Esophagus muscularis mucosa (tissue), 4 donors: ENCODE measurements at regions of chr1 and their contacts with region 1.

Region 1: GRCh38 chr1:14923727-14924452 is 229.7 kb upstream of the TMEM51 start:
- DNase-seq: no peak
- H3K4me3 ChIP-seq: peak overlapping the region; percentile 66 to 88 (median 70)
- H3K27ac ChIP-seq: peak overlapping the region; percentile 64 to 74 (median 72)
- H3K4me1 ChIP-seq: peaks cover 13 to 22% (median 20%) of the 10 kb centered on the region in 4 donors
- H3K27me3 ChIP-seq: no peaks in the 10 kb centered on the region
- CTCF ChIP-seq: no peak
- EP300 ChIP-seq: no peak
- POLR2A ChIP-seq: no peak

Region 2: GRCh38 chr1:14733048-14733778 is 190.7 kb before region 1 on chr1:
- intact Hi-C with region 1: no loop called
- DNase-seq: no peak
- H3K4me3 ChIP-seq: no peak overlapping the region
- H3K27ac ChIP-seq: no peak overlapping the region
- H3K4me1 ChIP-seq: peaks cover 0 to 17% (median 0%) of the 10 kb centered on the region in 4 donors
- H3K27me3 ChIP-seq: peaks cover 0 to 17% (median 0%) of the 10 kb centered on the region in 4 donors
- CTCF ChIP-seq: no peak
- EP300 ChIP-seq: no peak
- POLR2A ChIP-seq: no peak

Region 3: GRCh38 chr1:14968251-14968851 is 44.5 kb after region 1 on chr1:
- intact Hi-C with region 1: loop called (anchors 5 kb)
- DNase-seq: no peak
- H3K4me3 ChIP-seq: no peak overlapping the region
- H3K27ac ChIP-seq: peak overlapping the region; percentile 49 to 69 (median 62)
- H3K4me1 ChIP-seq: peaks cover 14 to 44% (median 40%) of the 10 kb centered on the region in 4 donors
- H3K27me3 ChIP-seq: no peaks in the 10 kb centered on the region
- CTCF ChIP-seq: no peak
- EP300 ChIP-seq: no peak
- POLR2A ChIP-seq: no peak

Region 4: DNA sequence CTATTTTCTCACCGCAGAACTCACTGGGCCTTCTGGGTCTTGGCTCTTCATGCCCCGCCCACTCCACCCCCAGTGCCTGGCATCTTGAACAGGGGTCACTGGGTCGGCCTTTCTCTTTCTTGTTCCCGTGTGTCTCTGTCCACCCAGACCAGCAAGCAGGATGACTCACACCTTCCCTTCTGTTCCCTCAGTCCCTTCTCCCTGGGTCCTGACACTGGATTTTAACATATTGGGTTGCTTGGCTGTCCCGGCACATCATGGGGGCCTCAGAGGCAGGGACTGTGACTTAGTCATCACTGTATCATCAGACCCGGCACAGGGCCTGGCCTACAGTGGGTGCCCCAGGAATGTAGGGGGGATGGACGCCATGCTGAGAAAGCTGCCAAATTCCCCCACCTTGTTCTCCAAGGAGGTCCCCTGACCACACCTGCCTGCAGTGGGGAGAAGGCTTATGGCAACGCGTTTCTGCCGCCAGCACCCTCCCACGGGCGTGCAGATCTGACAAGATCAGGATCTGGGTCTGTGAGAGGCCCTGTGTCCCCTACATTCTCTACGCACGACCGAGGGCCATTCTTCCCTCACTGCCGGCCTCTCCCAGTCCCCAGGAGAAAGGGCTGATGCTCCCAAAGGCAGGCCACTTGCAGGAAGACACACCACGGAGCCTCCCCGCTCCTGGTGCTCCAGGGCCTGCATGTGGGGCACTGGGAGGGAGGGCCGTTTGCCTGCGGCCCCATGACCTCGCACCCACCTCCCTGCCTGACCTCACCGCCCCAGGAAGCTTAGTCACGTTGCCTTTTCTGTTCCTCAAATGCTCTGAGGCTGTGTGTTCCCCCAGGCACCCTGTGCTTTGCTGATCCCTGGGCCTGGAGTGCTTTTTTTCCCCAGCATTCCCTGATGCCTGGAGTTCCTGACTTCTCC is 72.5 kb after region 1 on chr1:
- intact Hi-C with region 1: no loop called
- DNase-seq: no peak
- H3K4me3 ChIP-seq: no peak overlapping the region
- H3K27ac ChIP-seq: peak overlapping the region in 1 of 4 donors; percentile 11
- H3K4me1 ChIP-seq: peaks cover 0 to 14% (median 5%) of the 10 kb centered on the region in 4 donors
- H3K27me3 ChIP-seq: no peaks in the 10 kb centered on the region
- CTCF ChIP-seq: no peak
- EP300 ChIP-seq: no peak
- POLR2A ChIP-seq: no peak

Region 5: DNA sequence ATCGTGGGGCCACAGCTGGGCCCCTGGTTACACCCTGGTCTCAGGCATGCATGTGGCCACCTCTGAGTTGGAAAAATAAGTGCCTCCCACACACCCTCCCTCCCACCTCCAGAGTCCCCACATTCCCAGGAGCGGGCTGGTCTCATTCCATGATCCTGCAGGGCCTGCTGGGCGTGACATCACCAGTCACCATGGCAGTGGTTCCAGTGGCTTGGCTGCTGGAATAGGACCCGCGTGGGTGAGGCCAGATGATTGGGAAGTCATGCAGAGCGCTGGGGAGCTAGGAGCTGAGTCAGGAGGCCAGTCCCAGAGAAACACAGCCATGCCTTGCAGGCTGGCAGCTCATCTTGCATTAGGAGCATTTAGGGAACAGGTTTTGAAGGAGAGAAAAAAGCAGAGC is 104.2 kb after region 1 on chr1:
- intact Hi-C with region 1: loop called (anchors 2 kb)
- DNase-seq: no peak
- H3K4me3 ChIP-seq: no peak overlapping the region
- H3K27ac ChIP-seq: no peak overlapping the region
- H3K4me1 ChIP-seq: peaks cover 0 to 9% (median 5%) of the 10 kb centered on the region in 4 donors
- H3K27me3 ChIP-seq: no peaks in the 10 kb centered on the region
- CTCF ChIP-seq: no peak
- EP300 ChIP-seq: no peak
- POLR2A ChIP-seq: no peak

Region 6: GRCh38 chr1:16888860-16889816 is 1965.2 kb after region 1 on chr1:
- intact Hi-C with region 1: no loop called
- DNase-seq: peak; percentile 97
- H3K4me3 ChIP-seq: peak overlapping the region; percentile 59 to 69 (median 65)
- H3K27ac ChIP-seq: peak overlapping the region; percentile 83 to 92 (median 90)
- H3K4me1 ChIP-seq: peaks cover 7 to 18% (median 14%) of the 10 kb centered on the region in 4 donors
- H3K27me3 ChIP-seq: no peaks in the 10 kb centered on the region
- CTCF ChIP-seq: peak; percentile 34 to 46 (median 38)
- EP300 ChIP-seq: no peak
- POLR2A ChIP-seq: peak; percentile 9